ENCODE measurements at regions of chr12 and their contacts with region 1.

Region 1: GRCh38 chr12:46933947-46934346 is 108.2 kb upstream of the SLC38A4 start:
- DNase-seq: no peak
- ATAC-seq: peak; percentile 60

Region 2: DNA sequence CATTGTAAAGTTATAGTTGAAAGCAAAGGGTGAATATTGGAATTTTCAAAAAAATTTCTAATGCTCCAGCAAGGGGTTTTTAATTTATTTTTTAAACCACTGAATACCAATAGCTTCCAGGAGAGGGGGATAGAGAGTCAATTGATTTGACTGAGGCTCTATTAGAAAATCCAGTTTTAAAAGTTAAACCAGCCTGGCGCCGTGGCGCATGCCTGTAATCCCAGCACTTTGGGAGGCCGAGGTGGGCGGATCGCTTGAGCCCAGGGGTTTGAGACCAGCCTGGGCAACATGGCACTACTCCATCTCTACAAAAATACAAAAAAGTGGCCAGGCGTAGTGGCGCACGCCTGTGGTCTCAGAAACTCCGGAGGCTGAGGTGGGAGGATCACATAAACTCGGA is 258.2 kb before region 1 on chr12:
- intact Hi-C with region 1: loop called (anchors 5 kb)
- DNase-seq: peak; percentile 44
- ATAC-seq: no peak

Measured in left ventricle myocardium superior (tissue), 1 donor.